Psoas muscle (tissue), 8 donors: ENCODE measurements at regions of chr17 and their contacts with region 1.

Region 1: GRCh38 chr17:34542700-34543336 is 36.6 kb upstream of the TMEM132E start:
- DNase-seq: peak in 1 of 2 donors; percentile 24
- ATAC-seq: no peak
- H3K4me3 ChIP-seq: no peak overlapping the region
- H3K27ac ChIP-seq: no peak overlapping the region
- H3K4me1 ChIP-seq: no peaks in the 10 kb centered on the region
- H3K27me3 ChIP-seq: peaks cover 0 to 18% (median 0%) of the 10 kb centered on the region in 3 donors
- CTCF ChIP-seq: peak; percentile 78

Region 2: DNA sequence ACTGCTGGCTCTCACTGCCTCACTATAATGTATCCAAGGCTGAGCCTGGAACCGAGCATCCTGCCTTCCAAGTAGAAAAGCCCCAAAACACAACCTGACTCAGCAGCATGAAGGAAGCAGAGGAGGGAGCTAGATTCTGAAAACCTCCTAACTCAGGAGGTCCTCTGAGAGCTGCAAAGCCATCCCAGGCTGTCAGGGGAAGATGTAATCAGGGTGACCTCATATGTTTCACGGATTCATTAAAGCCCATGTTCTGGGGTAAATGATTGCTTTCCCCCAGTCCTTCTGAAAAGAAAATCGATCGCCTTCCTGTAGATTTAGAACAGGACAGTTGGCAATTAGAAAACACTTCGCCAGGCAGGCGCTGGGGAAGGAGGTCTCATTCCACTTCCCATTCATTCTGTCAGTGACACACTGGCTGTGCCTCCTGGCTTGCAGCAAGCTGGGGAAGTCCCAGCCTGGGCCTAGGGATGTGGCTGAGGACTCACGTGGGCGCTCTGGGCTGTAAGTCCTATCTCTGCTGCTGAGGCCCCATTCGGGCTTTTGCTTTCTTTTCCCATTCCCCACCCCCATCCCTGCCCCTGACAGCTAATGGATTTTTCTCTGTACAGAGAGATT is 39.2 kb before region 1 on chr17:
- intact Hi-C with region 1: no loop called
- DNase-seq: peak in 1 of 2 donors; percentile 16
- ATAC-seq: no peak
- H3K4me3 ChIP-seq: no peak overlapping the region
- H3K27ac ChIP-seq: no peak overlapping the region
- H3K4me1 ChIP-seq: no peaks in the 10 kb centered on the region
- H3K27me3 ChIP-seq: peaks cover 3 to 41% (median 4%) of the 10 kb centered on the region in 3 donors
- CTCF ChIP-seq: no peak

Region 3: GRCh38 chr17:34637548-34638525 is 95.0 kb after region 1 on chr17:
- intact Hi-C with region 1: loop called (anchors 5 kb)
- DNase-seq: peak; percentile 71 to 84
- ATAC-seq: peak; percentile 89 to 97 (median 92)
- H3K4me3 ChIP-seq: peak overlapping the region; percentile 62
- H3K27ac ChIP-seq: no peak overlapping the region
- H3K4me1 ChIP-seq: no peaks in the 10 kb centered on the region
- H3K27me3 ChIP-seq: peaks cover 0 to 52% (median 2%) of the 10 kb centered on the region in 3 donors
- CTCF ChIP-seq: peak; percentile 82

Region 4: GRCh38 chr17:34892461-34893249 is 349.8 kb after region 1 on chr17:
- intact Hi-C with region 1: loop called in 1 of 2 experiments (anchors 10 kb)
- DNase-seq: no peak
- ATAC-seq: no peak
- H3K4me3 ChIP-seq: no peak overlapping the region
- H3K27ac ChIP-seq: no peak overlapping the region
- H3K4me1 ChIP-seq: no peaks in the 10 kb centered on the region
- H3K27me3 ChIP-seq: peaks cover 0 to 13% (median 12%) of the 10 kb centered on the region in 3 donors
- CTCF ChIP-seq: peak; percentile 5